ENCODE measurements at regions of chr17 and their contacts with region 1.

Region 1: DNA sequence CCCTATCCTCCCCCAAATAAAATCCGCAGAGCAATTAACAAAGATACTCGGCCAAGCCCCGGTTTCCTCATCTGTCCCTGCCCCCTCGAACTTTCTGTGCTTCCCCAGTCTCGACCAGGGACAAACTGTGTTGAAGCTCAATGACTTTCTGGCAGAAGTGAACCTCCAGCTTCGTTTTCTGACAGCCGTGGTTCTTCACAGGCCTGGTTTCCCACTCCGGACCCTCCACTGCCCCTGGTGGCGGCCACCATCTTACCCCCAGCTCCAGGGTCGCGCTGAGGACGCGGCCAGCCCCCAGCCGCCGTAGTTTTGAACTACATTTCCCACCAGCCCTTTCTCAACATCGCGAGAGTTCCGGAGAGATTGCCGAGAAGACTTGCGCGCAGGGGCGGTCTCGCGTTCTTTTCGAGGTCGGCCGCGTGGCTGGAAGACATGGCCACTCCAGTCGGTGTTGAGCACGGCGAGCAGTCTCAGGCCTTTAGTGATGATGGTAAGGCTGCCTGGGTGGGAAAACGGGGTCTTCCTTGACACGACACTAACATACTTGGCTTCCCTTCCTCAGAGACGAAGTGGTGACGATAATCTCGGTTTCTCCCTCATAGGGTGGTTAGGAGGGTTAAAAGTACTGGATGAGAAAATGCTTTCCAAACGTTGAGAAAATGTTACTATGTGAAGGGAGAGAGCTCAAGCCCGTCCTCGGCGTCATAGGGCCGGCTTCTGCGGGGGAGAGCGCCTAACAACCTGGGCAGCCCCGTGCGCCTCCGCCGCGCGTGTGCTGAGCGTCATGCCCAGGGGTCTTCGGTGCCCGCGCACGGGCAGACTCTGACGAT is 17.7 kb downstream of the PRCD start:
- DNase-seq: peak; percentile 98
- H3K4me3 ChIP-seq: peak overlapping the region; percentile 83 to 92
- H3K27ac ChIP-seq: peak overlapping the region; percentile 71 to 89
- H3K4me1 ChIP-seq: peaks cover 26 to 42% of the 10 kb centered on the region in 2 experiments
- H3K27me3 ChIP-seq: no peaks in the 10 kb centered on the region
- CTCF ChIP-seq: peak; percentile 78
- EP300 ChIP-seq: no peak
- RAD21 ChIP-seq: peak; percentile 50

Region 2: DNA sequence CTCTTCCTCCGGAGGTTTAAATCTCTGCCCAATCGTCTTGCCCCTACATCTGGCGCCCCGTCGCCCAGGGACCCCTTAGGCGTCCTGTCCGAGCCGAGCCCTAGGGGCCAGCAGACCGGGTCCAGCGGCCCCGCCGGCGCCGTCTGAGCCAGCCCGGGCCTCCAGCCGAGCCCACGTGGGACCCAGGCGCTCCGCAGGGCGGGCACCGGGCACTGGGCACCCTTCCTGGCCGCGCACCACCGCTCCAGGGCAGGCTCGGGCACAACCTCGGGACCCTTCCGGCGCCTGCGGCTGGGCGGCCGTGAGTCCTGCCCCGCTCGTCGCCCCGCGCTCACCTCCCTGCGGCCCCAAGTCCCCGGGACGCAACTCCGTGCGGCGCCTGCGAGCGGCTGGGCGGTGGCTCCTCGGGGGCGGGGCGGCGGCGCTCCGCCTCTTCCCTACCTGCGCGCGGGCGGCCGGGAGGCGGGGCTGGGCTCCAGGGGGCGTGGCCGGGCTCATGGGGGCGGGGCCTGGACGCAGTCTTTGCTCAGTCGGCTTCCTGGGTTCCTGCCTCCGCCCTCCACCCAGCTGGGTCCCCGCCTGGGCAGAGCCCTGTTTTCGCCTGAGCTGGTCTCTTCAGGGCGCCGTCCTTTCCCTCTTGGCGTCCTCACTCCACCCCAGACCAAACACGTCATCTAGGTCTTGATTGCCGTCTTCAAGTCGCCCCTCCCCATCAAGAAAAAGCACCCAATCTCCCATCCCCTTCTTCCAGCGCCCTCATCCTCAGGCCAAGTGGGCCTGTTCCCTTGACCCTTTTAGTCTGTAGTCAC is 56.4 kb before region 1 on chr17 and contains the start of gene RHBDF2:
- CTCF ChIA-PET with region 1: interaction called, 17 read pairs
- POLR2A ChIA-PET with region 1: no interaction called
- DNase-seq: peak; percentile 97
- H3K4me3 ChIP-seq: peak within 1 kb of the TSS; percentile 65 to 78
- H3K27ac ChIP-seq: peak within 1 kb of the TSS in 1 of 2 experiments; percentile 30; a peak in 1 of 4 replicates
- H3K4me1 ChIP-seq: peaks cover 21 to 50% of the 10 kb centered on the region in 2 experiments; a peak in 3 of 4 replicates
- H3K27me3 ChIP-seq: no peaks in the 10 kb centered on the region
- CTCF ChIP-seq: no peak
- EP300 ChIP-seq: no peak
- RAD21 ChIP-seq: no peak
- polyA plus RNA-seq, gene RHBDF2: 14.0 and 16.1 TPM in 2 replicates

Region 3: DNA sequence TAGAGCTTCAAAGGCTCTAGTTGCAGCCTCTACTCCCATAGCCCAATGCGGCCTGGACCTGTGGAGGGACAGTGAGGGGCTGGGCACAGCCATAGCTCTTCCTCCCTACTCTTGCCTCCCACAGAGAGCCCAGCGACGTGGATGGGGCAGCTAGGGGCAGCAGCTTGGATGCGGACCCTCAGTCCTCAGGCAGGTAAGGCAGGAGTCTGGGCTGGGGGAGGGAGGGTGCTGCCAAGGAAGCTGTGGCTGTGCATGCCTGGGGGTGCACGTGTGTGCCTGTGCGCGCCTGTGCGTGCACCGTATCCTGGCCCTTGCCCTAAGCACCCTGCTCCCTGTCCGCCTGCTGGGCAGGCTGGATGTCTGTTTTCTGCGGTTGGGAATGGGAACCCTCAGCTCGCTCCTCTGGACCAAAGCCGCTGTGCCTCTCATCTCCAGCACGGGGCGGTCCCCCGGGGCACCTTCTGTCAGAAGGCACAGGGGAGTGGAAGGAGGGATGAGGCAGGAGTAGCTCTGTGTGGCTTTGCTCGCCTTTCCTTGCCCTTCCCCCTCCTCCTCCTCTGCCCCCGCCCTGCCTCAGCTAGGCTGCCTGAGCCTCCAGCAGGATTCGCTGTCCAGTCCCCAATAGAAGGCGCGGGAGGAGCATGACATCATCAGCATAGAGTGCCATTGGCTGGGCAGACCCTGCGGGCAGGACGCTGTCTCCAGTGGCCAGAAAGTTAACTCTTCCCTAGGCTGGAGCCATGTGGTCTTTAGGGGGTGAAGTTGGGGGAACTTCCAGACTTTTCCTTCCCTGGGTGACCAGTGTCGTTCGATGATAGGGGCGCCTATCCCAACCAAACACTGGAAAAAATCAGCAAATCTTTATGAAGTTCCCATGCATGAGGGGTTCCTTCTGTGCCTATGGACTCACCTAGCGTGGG is 16.9 kb before region 1 on chr17:
- CTCF ChIA-PET with region 1: interaction called, 100 read pairs
- POLR2A ChIA-PET with region 1: interaction called, 49 read pairs
- DNase-seq: peak; percentile 93
- H3K4me3 ChIP-seq: peak overlapping the region; percentile 37 to 41
- H3K27ac ChIP-seq: peak overlapping the region in 1 of 2 experiments; percentile 99; a peak in 2 of 4 replicates
- H3K4me1 ChIP-seq: peaks cover 10 to 88% of the 10 kb centered on the region in 2 experiments; a peak in 3 of 4 replicates
- H3K27me3 ChIP-seq: peaks cover 42% of the 10 kb centered on the region
- CTCF ChIP-seq: peak; percentile 33; the same call in 1 of the 2 replicates
- EP300 ChIP-seq: peak in 1 of 2 experiments; percentile 81; a peak in 2 of 4 replicates
- RAD21 ChIP-seq: peak; percentile 13; the same call in 1 of the 2 replicates

Region 4: GRCh38 chr17:76578344-76578979 is 20.9 kb after region 1 on chr17:
- CTCF ChIA-PET with region 1: interaction called, 89 read pairs
- POLR2A ChIA-PET with region 1: no interaction called
- DNase-seq: no peak
- H3K4me3 ChIP-seq: no peak overlapping the region
- H3K27ac ChIP-seq: no peak overlapping the region
- H3K4me1 ChIP-seq: no peaks in the 10 kb centered on the region
- H3K27me3 ChIP-seq: no peaks in the 10 kb centered on the region
- CTCF ChIP-seq: no peak
- EP300 ChIP-seq: no peak
- RAD21 ChIP-seq: no peak

Region 5: DNA sequence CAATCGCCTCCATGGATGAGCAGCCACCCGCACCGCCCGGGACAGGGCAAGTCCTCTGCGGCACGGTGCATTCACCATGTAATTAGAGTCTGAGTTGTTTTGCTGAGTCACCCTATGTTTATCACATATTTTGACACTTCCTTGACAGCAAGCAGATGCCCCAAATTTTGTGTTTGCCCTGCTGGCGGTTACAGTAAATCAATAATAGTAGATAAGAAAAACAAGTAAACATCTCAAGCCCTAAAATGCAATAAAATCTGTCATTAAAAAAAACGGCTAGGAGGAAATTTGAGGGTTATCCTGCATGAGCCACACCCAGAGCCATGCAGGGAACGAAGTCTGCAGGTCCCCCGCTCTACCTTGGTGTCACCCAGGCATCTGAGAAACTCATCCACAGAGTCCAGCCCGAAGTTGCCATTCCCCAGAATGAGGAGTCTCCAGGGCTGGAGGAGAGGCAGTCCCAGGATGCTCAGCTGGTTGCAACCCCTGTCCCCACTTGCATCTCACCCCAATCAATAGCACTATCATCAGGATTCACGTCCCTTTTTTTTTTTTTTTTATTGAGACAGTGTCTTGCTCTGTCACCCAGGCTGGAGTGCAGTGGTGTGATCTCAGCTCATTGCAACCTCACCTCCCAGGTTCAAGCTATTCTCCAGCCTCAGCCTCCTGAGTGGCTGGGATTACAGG is 102.5 kb after region 1 on chr17:
- CTCF ChIA-PET with region 1: interaction called, 22 read pairs
- POLR2A ChIA-PET with region 1: no interaction called
- DNase-seq: peak; percentile 73
- H3K4me3 ChIP-seq: no peak overlapping the region
- H3K27ac ChIP-seq: no peak overlapping the region
- H3K4me1 ChIP-seq: peaks cover 0 to 10% of the 10 kb centered on the region in 2 experiments; a peak in 1 of 4 replicates
- H3K27me3 ChIP-seq: no peaks in the 10 kb centered on the region
- CTCF ChIP-seq: no peak
- EP300 ChIP-seq: peak in 1 of 2 experiments; percentile 63; a peak in 1 of 4 replicates
- RAD21 ChIP-seq: peak; percentile 14; the same call in 1 of the 2 replicates

Region 6: DNA sequence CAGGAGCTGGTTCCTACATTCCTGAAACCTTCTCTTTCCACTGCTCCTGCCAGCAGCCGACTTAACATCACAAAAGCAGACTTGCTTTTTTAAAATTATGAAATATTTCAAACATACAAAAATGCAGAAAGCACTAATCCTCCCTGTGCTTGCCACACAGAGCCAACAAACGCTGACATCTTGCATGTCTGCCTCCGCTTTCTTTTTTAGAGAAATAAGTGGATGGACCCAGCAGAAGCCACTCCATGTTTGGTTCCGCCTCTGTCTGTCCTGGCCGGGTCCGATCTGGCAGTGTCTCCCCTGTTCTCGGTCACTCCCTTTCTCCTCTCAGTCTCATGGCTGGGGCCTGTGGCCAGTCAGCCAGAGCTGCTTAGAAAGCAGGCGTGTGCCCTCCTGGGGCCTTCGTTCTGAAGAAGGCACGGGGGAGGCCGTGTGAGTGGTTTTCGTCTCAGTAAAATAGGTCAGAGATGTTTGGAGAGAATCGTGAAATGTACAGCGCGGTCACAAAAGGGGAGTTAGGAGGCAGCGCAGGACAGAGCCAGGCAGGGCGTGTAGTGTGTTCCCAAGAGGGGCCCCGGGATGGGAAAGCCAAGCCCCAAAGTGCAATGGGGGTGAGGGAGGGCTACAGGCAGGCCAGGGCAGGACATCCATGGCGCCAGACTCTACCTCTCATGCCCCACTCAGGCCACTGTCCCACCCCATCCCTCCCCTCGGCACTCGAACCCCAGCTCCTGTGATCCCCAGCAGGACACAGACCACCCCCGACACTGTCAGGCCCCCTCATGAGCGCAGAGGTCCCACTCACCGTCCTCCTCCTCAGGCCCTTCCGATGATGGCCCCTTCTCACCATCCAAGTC is 130.0 kb after region 1 on chr17:
- CTCF ChIA-PET with region 1: interaction called, 116 read pairs
- POLR2A ChIA-PET with region 1: interaction called, 3 read pairs
- DNase-seq: no peak
- H3K4me3 ChIP-seq: no peak overlapping the region
- H3K27ac ChIP-seq: peak overlapping the region in 1 of 2 experiments; percentile 13; a peak in 2 of 4 replicates
- H3K4me1 ChIP-seq: peaks cover 0 to 20% of the 10 kb centered on the region in 2 experiments; a peak in 1 of 4 replicates
- H3K27me3 ChIP-seq: no peaks in the 10 kb centered on the region
- CTCF ChIP-seq: no peak
- EP300 ChIP-seq: no peak
- RAD21 ChIP-seq: no peak